ENCODE measurements at regions of chr20 and their contacts with region 1.

Region 1: DNA sequence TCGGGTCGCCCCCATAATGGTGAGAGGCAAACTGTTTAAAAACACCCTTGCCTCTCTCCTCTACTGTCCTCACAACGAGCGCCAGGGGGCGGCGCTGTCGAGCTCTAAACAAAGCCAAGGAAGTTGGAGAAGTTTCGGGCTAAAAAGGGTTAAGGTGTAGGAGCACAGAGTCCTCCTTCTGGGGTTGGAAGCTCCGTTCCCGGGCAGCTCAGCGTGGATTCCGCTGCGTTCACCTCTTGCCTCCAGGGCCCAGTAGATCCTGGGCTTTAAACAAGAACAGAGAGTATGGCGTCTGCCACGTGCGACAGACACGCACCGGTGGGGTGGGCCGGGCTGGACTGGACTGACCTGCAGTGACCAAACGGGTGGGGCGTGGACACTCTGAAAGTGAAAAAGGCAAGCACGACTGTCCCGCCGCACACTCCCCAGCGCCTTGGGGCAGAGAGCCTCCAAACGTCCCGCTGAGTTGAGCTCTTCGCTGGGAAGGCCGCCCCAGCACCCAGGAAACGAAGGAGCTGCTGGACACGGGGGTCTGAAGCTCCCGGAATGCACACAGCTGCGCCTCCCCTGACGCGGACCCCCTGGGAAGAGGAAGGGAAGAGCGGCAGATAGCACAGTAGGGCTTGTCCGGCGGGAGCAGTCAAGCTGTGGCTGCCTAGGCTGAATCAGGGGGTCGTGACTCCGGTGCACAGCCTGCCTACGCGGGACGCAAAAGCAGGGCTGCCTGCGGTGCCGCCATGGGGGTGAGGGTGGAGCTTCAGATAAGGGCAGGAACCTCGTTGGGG is 1.6 kb upstream of the THBD start:
- DNase-seq: peak; percentile 47
- CTCF ChIP-seq: peak; percentile 36

Region 2: DNA sequence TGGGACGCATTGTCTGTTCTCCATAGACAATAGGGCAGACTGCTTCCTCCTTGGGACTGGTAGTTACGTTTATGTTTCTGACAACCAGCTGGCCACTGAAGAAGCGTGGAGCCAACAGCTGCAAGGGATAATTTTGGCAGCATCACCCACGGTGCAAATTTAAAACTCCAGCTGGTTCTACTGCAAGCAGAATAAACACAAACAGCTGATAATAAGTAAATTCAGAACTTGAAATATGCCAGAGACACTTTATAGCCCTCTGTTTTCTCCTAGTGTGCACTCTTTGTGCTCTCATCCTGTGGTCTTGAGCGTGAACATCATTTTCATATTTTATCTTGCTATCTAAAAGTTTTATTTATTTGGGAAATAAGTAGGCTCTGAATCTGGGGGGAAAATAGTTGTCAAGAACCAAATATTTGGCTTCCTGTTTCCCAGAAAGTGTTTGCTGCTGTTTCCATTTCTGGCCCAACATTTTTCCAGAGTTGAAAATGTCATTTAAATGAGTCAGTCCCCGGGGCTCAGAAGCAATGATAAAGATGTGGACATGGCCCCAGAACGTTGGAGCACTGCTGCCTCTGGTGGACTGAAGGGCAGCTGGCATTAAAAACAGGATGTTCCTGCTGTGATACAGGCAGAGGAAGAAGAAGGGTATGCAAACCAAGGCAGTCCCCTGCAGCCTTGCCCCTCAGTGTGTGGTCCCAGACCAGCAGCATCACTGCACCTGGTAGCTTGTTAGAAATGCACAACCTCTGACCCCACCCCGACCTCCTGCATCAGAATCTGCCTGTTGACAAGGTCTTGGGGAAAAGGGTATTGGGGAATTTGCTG is 10.9 kb after region 1 on chr20:
- CTCF ChIA-PET with region 1: interaction called, 23 read pairs
- POLR2A ChIA-PET with region 1: interaction called, 3 read pairs
- DNase-seq: no peak
- CTCF ChIP-seq: no peak

Region 3: GRCh38 chr20:23200918-23201317 is 149.9 kb after region 1 on chr20:
- CTCF ChIA-PET with region 1: interaction called, 33 read pairs
- POLR2A ChIA-PET with region 1: no interaction called
- DNase-seq: peak; percentile 27
- CTCF ChIP-seq: peak; percentile 11

Region 4: GRCh38 chr20:23245553-23246181 is 194.6 kb after region 1 on chr20:
- CTCF ChIA-PET with region 1: interaction called, 18 read pairs
- POLR2A ChIA-PET with region 1: no interaction called
- DNase-seq: peak; percentile 80
- CTCF ChIP-seq: peak; percentile 62